Mammary epithelial cell (primary cell): ENCODE measurements at regions of chr3 and their contacts with region 1.

Region 1: GRCh38 chr3:149512209-149512782 is 37.8 kb downstream of the TM4SF4 start:
- DNase-seq: peak; percentile 36
- H3K4me3 ChIP-seq: no peak overlapping the region
- H3K27ac ChIP-seq: no peak overlapping the region
- H3K4me1 ChIP-seq: peaks cover 11% of the 10 kb centered on the region
- H3K27me3 ChIP-seq: no peaks in the 10 kb centered on the region
- CTCF ChIP-seq: peak; percentile 81 to 83

Region 2: DNA sequence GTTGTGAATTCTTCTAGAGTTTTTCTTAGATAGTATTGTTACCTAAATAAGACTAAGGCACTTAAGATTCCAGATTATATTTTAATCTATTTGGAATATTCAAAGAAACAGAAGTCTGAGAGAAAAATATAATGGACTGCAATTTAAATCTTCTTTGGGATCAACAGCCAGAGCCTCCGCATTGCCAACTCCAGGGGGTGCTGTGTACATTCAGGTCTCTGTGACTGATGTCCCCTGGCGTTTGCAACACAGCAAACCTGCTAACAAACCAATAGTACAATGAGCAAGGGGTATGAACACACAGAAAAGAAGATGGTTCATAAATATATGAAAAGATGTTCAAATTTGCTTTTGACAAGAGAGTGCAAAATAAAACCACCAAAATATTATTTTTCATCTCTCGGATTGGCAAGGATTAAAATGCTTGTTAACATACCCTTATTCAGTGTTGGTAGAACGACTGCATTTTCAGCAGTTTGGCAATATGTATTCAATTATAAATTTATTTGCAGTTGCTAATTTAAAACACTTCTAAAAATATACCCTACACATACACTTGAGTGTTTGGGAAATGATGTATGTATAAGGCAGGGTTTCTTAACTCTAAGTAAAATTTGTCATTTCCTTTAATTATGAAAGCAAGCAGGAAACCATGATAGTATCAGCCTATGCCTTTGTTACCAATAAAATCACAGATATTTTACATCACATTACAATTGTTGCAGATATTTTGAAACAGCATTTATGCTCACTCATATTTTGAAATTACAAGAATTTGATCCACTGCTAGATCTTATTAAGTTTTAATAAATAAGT is 118.7 kb before region 1 on chr3:
- CTCF ChIA-PET with region 1: no interaction called
- dilution Hi-C with region 1: no loop called
- in situ Hi-C with region 1: no loop called
- intact Hi-C with region 1: loop called (anchors 1 kb)
- DNase-seq: peak; percentile 58
- H3K4me3 ChIP-seq: no peak overlapping the region
- H3K27ac ChIP-seq: no peak overlapping the region
- H3K4me1 ChIP-seq: peaks cover 10% of the 10 kb centered on the region
- H3K27me3 ChIP-seq: no peaks in the 10 kb centered on the region
- CTCF ChIP-seq: peak; percentile 93 to 98

Region 3: DNA sequence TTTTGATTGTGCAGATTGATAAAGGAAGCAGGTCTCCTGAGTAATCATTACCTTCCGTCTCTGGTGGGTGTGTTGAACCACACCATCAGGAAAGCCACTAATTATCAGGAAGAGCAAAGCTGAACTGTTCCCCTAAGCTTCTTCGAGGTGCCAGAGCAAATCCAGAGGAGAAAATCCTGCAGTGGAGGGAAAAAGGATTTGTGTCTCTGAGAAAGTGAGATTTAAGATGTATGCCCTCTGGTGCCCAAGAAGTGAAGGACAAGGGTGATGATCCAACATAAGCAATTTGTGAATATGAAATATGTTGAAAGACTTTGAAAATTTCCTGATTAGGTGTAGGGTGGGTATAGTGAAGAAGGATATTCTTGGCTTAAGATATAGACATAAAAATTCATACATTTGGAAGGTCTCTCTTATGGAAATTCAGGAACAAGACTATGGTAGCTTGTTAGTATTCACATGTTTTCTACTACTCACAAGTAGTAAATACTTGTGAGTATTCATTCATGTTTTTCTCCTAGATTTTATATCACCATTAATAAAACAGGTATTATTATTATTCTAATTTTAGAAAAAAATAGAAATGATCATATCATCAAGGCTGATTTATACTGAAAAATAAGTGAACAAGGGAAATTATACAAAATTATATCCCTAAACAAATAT is 205.2 kb after region 1 on chr3:
- CTCF ChIA-PET with region 1: interaction called, 4 read pairs
- dilution Hi-C with region 1: no loop called
- in situ Hi-C with region 1: no loop called
- intact Hi-C with region 1: loop called (anchors 1 kb)
- DNase-seq: peak; percentile 59
- H3K4me3 ChIP-seq: no peak overlapping the region
- H3K27ac ChIP-seq: no peak overlapping the region
- H3K4me1 ChIP-seq: peaks cover 8% of the 10 kb centered on the region
- H3K27me3 ChIP-seq: no peaks in the 10 kb centered on the region
- CTCF ChIP-seq: peak; percentile 65 to 71

Region 4: DNA sequence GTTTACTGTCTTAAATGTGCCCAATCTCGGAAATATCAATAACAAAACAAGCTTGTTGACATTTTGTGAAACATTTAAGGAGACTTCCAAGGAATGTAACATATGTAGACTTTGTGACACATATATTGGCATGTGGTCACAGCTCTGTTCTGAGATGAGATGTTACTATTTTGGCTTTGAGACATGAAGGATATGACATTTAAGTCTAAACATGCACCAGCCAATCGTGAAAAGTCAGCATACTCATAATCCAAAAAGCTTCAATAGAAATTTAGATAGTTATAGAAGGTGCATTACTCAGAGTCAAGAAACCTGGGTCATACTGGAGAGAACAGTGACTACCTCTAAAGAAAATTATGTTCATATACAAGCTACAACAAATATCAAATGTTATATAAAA is 226.6 kb after region 1 on chr3:
- CTCF ChIA-PET with region 1: no interaction called
- dilution Hi-C with region 1: no loop called
- in situ Hi-C with region 1: no loop called
- intact Hi-C with region 1: no loop called
- DNase-seq: peak; percentile 4
- H3K4me3 ChIP-seq: no peak overlapping the region
- H3K27ac ChIP-seq: no peak overlapping the region
- H3K4me1 ChIP-seq: peaks cover 12% of the 10 kb centered on the region
- H3K27me3 ChIP-seq: no peaks in the 10 kb centered on the region
- CTCF ChIP-seq: no peak

Region 5: DNA sequence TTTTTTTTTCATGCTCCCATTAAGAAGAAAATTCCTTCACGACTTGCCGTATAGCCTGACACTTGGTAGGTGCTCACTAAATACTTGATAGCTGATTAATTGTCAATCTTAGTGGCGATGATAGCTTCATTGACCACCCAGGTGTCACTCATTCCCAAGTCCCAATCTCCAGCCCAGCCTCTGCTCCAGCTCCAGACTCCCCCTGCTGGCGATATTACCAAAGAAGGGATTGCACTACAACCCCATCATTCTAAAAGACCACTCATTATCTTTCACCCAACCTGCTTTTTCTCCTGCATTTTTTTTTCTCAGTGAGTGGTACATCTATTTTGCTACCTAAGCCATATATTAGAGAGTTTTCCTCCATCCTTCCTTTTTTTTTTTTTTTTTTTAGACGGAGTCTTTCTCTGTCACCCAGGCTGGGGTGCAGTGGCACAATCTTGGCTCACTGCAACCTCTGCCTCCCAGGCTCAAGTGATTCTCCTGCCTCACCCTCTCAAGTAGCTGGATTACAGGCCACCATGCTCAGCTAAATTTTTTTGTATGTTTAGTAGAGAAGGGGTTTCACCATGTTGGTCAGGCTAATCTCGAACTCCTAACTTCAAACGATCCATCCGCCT is 259.5 kb after region 1 on chr3:
- CTCF ChIA-PET with region 1: no interaction called
- dilution Hi-C with region 1: loop called (anchors 25 kb)
- in situ Hi-C with region 1: no loop called
- intact Hi-C with region 1: loop called (anchors 1 kb)
- DNase-seq: no peak
- H3K4me3 ChIP-seq: no peak overlapping the region
- H3K27ac ChIP-seq: no peak overlapping the region
- H3K4me1 ChIP-seq: no peaks in the 10 kb centered on the region
- H3K27me3 ChIP-seq: no peaks in the 10 kb centered on the region
- CTCF ChIP-seq: peak; percentile 82 to 85

Region 6: DNA sequence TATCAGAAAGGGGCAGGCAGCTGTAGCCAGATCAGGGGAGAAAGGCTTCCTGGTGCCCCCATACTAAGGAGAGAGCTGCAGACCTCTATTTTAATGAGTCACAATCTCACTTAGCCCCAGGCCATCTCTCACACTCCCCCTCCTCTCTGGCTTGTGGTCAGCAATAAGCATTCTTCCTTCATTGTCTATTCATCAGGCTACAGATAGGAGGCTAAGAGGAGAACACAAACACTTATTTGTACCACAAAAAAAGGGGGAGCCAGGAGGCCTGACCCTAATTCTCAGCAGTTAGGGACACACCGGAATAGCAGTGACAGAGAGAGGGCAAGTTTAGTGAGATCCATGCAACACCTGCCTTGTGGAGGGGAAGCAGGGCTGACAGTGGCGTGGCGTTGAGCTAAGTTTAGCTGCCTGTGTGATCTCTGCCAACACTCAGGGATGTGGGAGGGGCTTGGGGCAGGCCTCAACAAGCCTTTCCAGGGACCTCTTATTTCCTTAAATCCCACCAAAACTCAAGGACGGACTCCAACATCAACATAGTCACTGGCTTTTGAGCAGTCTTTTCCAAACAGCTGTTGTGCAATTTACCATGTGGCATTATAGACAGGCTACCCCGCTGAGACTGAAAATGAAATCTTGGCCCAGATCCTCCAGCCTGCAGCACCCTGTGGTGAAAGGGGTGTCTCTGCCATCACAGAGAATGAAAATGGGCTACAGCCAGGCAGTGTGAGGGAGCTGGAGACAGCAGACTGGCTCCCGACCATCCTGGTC is 703.9 kb after region 1 on chr3:
- CTCF ChIA-PET with region 1: no interaction called
- dilution Hi-C with region 1: no loop called
- in situ Hi-C with region 1: loop called in 1 of 2 experiments (anchors 25 kb)
- intact Hi-C with region 1: loop called (anchors 10 kb)
- DNase-seq: peak; percentile 56
- H3K4me3 ChIP-seq: no peak overlapping the region
- H3K27ac ChIP-seq: no peak overlapping the region
- H3K4me1 ChIP-seq: peaks cover 16% of the 10 kb centered on the region
- H3K27me3 ChIP-seq: no peaks in the 10 kb centered on the region
- CTCF ChIP-seq: no peak